Activated CD8-positive, alpha-beta T cell treated with anti-CD3 and anti-CD28 coated beads for 36 hours (primary cell): ENCODE measurements at regions of chr11 and their contacts with region 1.

Region 1: GRCh38 chr11:62591448-62592145 is at the start of gene TUT1:
- DNase-seq: peak; percentile 98
- ATAC-seq: peak; percentile 91
- H3K4me3 Mint-ChIP-seq: peak within 1 kb of the TSS; percentile 100
- H3K27ac Mint-ChIP-seq: peak within 1 kb of the TSS; percentile 98
- H3K4me1 Mint-ChIP-seq: peaks cover 49% of the 10 kb centered on the region
- H3K27me3 Mint-ChIP-seq: no peaks in the 10 kb centered on the region
- CTCF ChIP-seq: no peak
- total RNA-seq, gene TUT1: 34.4 to 38.0 TPM

Region 2: DNA sequence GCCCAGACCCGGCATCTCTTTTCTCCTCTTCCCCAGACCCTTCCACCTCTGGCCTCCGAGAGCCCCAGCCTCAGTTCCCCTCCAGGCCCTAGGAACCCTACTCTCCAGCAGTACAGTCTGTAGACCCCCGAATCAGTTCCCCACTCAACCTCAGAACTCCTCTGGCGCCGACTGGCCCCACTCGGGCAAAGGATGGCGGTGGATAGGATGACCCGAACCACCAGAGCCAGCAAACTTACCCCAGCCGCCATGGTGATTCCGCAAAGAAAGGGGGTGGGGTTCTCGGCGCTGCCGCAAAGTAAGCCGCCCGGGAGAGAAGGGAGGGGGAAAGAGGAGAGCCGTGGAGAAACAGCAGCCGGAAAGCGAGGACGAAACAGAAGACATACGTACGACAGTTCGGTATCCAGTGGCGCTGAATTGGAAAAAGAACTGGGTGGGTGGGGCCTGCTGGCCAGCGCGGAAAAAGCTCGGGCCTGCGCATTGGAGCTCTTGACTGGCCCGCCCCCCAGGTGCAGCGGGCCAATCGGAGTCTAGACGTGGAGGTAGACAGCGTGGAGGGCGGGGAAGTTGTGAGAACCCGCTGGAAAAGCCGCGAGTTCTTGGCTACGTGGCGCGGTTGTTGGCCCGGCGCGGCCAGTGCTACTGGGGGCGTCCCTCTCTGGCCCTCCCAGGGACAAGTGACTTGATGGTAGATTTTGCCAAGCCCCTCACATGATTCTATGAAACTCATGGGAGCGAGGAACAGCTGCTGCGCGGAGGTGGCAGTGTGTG is 17.8 kb before region 1 on chr11 and contains the start of gene EEF1G:
- CTCF ChIA-PET with region 1: interaction called, 9 read pairs
- POLR2A ChIA-PET with region 1: interaction called, 55 read pairs
- intact Hi-C with region 1: no loop called
- DNase-seq: peak; percentile 99
- ATAC-seq: peak; percentile 98
- H3K4me3 Mint-ChIP-seq: peak within 1 kb of the TSS; percentile 96
- H3K27ac Mint-ChIP-seq: peak within 1 kb of the TSS; percentile 97
- H3K4me1 Mint-ChIP-seq: peaks cover 48% of the 10 kb centered on the region
- H3K27me3 Mint-ChIP-seq: no peaks in the 10 kb centered on the region
- CTCF ChIP-seq: no peak
- total RNA-seq, gene EEF1G: 1,925 to 1,979 TPM

Region 3: GRCh38 chr11:62627714-62628113 is 36.1 kb after region 1 on chr11:
- CTCF ChIA-PET with region 1: no interaction called
- POLR2A ChIA-PET with region 1: interaction called, 10 read pairs
- intact Hi-C with region 1: no loop called
- DNase-seq: peak; percentile 12
- ATAC-seq: peak; percentile 37
- H3K4me3 Mint-ChIP-seq: no peak overlapping the region
- H3K27ac Mint-ChIP-seq: peak overlapping the region; percentile 14
- H3K4me1 Mint-ChIP-seq: peaks cover 5% of the 10 kb centered on the region
- H3K27me3 Mint-ChIP-seq: no peaks in the 10 kb centered on the region
- CTCF ChIP-seq: no peak

Region 4: DNA sequence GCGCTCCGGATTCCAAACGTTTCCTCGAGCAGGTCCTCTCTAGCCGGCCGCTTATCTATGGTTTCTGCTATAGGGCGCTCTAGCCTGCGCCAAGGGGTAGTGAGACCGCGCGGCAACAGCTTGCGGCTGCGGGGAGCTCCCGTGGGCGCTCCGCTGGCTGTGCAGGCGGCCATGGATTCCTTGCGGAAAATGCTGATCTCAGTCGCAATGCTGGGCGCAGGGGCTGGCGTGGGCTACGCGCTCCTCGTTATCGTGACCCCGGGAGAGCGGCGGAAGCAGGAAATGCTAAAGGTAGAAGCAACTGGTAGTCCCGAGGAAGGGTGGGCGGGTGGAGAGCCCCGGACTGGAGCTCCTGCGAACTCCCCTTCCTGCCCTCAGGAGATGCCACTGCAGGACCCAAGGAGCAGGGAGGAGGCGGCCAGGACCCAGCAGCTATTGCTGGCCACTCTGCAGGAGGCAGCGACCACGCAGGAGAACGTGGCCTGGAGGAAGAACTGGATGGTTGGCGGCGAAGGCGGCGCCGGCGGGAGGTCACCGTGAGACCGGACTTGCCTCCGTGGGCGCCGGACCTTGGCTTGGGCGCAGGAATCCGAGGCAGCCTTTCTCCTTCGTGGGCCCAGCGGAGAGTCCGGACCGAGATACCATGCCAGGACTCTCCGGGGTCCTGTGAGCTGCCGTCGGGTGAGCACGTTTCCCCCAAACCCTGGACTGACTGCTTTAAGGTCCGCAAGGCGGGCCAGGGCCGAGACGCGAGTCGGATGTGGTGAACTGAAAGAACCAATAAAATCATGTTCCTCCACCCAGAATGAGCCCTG is 80.2 kb after region 1 on chr11 and contains the starts of genes LBHD1 and UQCC3:
- CTCF ChIA-PET with region 1: interaction called, 8 read pairs
- POLR2A ChIA-PET with region 1: interaction called, 79 read pairs
- intact Hi-C with region 1: loop called (anchors 5 kb)
- DNase-seq: peak; percentile 96
- ATAC-seq: peak; percentile 91
- H3K4me3 Mint-ChIP-seq: peak within 1 kb of the TSS; percentile 91
- H3K27ac Mint-ChIP-seq: peak within 1 kb of the TSS; percentile 98
- H3K4me1 Mint-ChIP-seq: peaks cover 41% of the 10 kb centered on the region
- H3K27me3 Mint-ChIP-seq: no peaks in the 10 kb centered on the region
- CTCF ChIP-seq: no peak
- total RNA-seq, gene LBHD1: 12.0 to 12.9 TPM
- total RNA-seq, gene UQCC3: 4.7 TPM

Region 5: DNA sequence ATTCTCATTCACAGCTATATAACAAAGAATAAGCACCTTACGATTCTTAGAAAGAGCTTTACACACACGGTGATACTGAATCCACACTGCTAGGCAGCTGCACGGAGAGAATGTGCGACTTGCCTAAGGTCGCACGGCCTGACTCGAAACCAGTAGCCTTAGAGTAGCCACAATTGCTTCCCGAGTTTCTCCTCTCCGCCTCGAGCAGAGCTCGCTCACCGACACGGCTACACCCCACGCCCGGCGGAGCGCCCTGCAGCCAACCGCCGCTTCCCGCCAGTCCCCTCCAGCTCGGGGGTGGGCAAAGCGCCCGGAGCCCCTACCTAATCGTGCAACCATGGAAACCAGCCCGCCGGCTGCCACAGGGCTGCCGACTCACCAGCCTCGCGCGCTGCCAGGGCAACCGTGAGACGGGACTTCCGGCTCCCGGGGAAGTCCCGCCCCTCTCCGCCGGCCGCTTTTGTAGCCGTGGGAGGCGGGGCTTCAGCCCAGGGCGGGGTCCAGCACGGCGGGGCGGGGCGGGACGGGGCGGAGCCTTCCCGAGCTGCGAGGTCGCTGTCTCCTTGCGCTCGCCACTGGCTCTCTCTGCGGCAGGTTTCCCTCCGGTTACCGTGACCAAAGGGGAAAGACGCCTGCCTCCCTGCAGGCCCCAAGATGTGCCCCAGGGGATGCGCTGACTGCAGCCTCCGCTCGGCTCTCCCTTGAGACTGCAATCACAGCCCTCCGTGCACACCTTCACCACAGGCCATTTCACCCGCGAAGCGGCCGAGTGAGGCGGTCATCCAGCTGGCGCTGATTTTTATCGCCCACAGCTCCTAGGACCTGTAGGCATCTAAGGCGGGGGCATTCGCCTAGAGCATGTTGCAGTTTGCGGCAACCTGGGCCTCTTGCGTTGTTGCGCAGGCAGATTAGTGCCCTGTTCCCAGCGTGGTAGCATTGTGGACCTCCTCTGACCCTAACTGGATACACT is 114.6 kb after region 1 on chr11:
- CTCF ChIA-PET with region 1: no interaction called
- POLR2A ChIA-PET with region 1: interaction called, 26 read pairs
- intact Hi-C with region 1: no loop called
- DNase-seq: peak; percentile 97
- ATAC-seq: peak; percentile 77
- H3K4me3 Mint-ChIP-seq: peak overlapping the region; percentile 84
- H3K27ac Mint-ChIP-seq: peak overlapping the region; percentile 77
- H3K4me1 Mint-ChIP-seq: peaks cover 43% of the 10 kb centered on the region
- H3K27me3 Mint-ChIP-seq: no peaks in the 10 kb centered on the region
- CTCF ChIP-seq: no peak

Region 6: DNA sequence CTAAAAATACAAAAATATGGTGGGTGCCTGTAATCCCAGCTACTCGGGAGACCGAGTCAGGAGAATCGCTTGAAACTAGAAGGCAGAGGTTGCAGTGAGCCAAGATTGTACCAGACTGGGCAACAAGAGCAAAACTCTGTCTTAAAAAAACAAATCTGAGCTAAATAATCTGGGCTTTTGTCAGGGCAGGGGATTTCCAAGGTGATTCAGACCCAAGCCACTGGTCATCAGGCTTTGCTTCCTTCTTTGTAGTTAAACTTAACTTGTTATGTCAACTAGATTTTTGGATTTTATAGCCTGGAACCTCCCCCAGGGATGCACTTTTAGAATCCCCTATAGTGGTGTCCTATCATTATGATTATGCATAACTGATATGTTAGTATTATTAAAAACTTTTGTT is 451.0 kb after region 1 on chr11:
- CTCF ChIA-PET with region 1: no interaction called
- POLR2A ChIA-PET with region 1: no interaction called
- intact Hi-C with region 1: no loop called
- DNase-seq: no peak
- ATAC-seq: no peak
- H3K4me3 Mint-ChIP-seq: no peak overlapping the region
- H3K27ac Mint-ChIP-seq: no peak overlapping the region
- H3K4me1 Mint-ChIP-seq: no peaks in the 10 kb centered on the region
- H3K27me3 Mint-ChIP-seq: peaks cover 28% of the 10 kb centered on the region
- CTCF ChIP-seq: no peak